IMR-90 (cell line): ENCODE measurements at regions of chr22 and their contacts with region 1.

Region 1: DNA sequence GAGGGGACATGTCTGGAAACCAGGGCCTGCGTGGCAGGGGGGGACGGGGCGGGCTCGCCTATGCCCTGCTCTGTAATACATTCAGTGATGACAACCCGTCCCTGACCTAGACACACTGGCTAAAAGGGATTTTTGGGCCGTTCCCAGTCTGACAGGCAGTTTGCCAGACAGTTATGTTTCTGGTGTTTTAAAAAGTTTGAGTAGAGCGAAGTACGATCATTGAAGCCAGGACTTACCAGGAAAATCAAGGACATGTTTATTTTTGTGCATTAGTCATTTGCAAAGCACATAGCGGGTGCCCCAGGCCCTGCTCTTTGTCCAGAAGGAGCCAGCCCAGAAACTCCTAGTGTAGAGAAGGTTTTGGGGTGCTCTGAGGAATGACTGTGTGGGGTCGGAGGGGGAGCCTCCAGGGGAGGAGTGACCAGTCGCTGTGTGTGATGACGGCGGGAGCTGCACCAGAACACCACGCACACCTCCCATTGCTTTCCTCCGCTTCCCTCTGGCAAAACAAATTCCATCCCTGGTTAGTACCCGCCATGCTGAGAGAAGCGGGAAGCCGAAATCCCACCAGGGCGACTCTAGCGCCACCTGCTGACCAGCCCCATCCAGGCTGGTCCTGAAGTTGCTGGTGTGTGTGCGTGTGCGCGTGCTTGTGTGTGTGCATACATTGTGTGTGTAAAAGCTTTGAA is 50.8 kb downstream of the FBLN1 start:
- DNase-seq: peak; percentile 93
- ATAC-seq: peak; percentile 46
- H3K4me3 ChIP-seq: no peak overlapping the region
- H3K27ac ChIP-seq: peak overlapping the region; percentile 89
- H3K4me1 ChIP-seq: peaks cover 41% of the 10 kb centered on the region
- H3K27me3 ChIP-seq: no peaks in the 10 kb centered on the region
- CTCF ChIP-seq: peak; percentile 98
- POLR2A ChIP-seq: no peak; the same call in 1 of the 2 replicates
- RAD21 ChIP-seq: peak; percentile 97

Region 2: GRCh38 chr22:44975427-44976262 is 577.9 kb before region 1 on chr22:
- CTCF ChIA-PET with region 1: no interaction called
- POLR2A ChIA-PET with region 1: no interaction called
- dilution Hi-C with region 1: no loop called
- in situ Hi-C with region 1: loop called (anchors 25 kb)
- intact Hi-C with region 1: no loop called
- DNase-seq: peak; percentile 76
- ATAC-seq: peak; percentile 99
- H3K4me3 ChIP-seq: no peak overlapping the region
- H3K27ac ChIP-seq: no peak overlapping the region
- H3K4me1 ChIP-seq: no peaks in the 10 kb centered on the region
- H3K27me3 ChIP-seq: peaks cover 30% of the 10 kb centered on the region
- CTCF ChIP-seq: peak; percentile 92
- POLR2A ChIP-seq: no peak
- RAD21 ChIP-seq: peak; percentile 78

Region 3: GRCh38 chr22:45192701-45193187 is 360.8 kb before region 1 on chr22:
- CTCF ChIA-PET with region 1: no interaction called
- POLR2A ChIA-PET with region 1: no interaction called
- dilution Hi-C with region 1: no loop called
- in situ Hi-C with region 1: no loop called
- intact Hi-C with region 1: no loop called
- DNase-seq: no peak
- ATAC-seq: no peak
- H3K4me3 ChIP-seq: no peak overlapping the region
- H3K27ac ChIP-seq: no peak overlapping the region
- H3K4me1 ChIP-seq: peaks cover 3% of the 10 kb centered on the region; the same call in 1 of the 2 replicates
- H3K27me3 ChIP-seq: no peaks in the 10 kb centered on the region
- CTCF ChIP-seq: 0 out of 2 replicates have a peak, but pooled peaks have one; percentile 14
- POLR2A ChIP-seq: no peak
- RAD21 ChIP-seq: no peak

Region 4: DNA sequence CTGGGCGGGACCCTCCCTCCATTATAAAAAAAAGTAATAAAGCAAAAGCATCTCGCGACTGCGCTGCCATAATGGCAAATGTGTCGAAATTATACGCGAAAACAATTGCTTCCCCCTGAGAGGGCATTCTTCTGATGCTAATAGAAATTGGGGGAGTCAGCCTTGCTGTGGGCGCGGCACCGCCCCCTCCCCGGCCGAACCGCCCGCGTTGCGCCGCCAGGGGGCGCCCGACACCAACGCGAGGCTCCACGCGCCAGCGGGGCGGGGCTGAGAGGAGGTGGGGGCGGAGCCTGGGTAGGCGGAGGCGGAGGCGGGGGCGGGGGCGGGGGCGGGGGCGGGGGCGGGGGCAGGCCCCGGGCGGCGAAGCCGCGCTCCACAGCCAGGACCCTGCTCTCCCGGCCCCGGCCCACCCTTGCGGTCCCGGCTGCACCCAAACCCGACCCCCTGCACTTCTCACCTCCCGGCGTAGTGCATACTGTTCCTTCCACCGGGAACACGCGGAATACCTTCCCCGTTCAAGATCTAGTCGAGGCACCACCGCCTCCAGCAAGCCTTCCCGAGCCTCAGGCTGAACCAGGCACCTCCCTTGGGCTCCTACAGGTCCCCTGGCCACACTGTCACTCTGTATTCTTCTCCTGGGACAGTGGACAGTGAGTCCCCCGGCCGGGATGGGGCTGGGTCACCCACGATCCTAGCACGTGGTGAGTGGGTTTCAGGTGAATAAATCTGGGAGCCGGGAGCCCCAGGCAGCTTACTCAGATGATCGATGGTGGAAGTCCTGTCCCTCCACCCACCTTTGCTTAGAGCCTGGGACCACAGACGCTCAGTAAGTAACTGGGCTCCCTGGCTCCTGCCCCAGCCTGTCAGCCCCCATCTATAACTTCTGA is 284.3 kb before region 1 on chr22:
- CTCF ChIA-PET with region 1: interaction called, 10 read pairs
- POLR2A ChIA-PET with region 1: no interaction called
- dilution Hi-C with region 1: no loop called
- in situ Hi-C with region 1: loop called (anchors 5 kb)
- intact Hi-C with region 1: loop called (anchors 1 kb)
- DNase-seq: peak; percentile 53
- ATAC-seq: peak; percentile 96
- H3K4me3 ChIP-seq: peak overlapping the region; percentile 86
- H3K27ac ChIP-seq: peak overlapping the region; percentile 54
- H3K4me1 ChIP-seq: peaks cover 9% of the 10 kb centered on the region
- H3K27me3 ChIP-seq: peaks cover 8% of the 10 kb centered on the region
- CTCF ChIP-seq: peak; percentile 90
- POLR2A ChIP-seq: no peak
- RAD21 ChIP-seq: peak; percentile 93

Region 5: DNA sequence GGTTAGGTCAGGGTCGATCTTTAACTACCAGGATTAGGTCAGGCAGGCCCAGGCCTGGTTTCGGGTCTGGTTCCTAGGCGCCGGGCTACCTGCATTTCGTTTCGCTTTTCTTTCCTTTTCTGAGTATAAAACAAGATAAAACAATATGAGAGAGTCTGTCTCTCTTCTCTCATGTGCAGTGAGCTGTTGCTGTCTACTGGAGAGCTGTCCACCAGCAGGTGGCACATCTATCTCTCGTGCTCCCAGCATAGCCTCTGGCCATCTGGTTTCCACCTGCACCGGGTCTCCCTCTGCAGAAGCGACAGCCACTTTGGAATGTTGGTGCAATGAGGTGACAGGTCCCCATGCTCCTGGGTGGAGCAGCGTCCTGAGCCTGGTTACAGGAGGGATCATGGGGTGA is 112.4 kb before region 1 on chr22:
- CTCF ChIA-PET with region 1: interaction called, 8 read pairs
- POLR2A ChIA-PET with region 1: no interaction called
- dilution Hi-C with region 1: no loop called
- in situ Hi-C with region 1: no loop called
- intact Hi-C with region 1: loop called (anchors 1 kb)
- DNase-seq: peak; percentile 68
- ATAC-seq: peak; percentile 75
- H3K4me3 ChIP-seq: no peak overlapping the region
- H3K27ac ChIP-seq: no peak overlapping the region
- H3K4me1 ChIP-seq: peaks cover 20% of the 10 kb centered on the region
- H3K27me3 ChIP-seq: no peaks in the 10 kb centered on the region
- CTCF ChIP-seq: peak; percentile 73
- POLR2A ChIP-seq: no peak
- RAD21 ChIP-seq: peak; percentile 84

Region 6: DNA sequence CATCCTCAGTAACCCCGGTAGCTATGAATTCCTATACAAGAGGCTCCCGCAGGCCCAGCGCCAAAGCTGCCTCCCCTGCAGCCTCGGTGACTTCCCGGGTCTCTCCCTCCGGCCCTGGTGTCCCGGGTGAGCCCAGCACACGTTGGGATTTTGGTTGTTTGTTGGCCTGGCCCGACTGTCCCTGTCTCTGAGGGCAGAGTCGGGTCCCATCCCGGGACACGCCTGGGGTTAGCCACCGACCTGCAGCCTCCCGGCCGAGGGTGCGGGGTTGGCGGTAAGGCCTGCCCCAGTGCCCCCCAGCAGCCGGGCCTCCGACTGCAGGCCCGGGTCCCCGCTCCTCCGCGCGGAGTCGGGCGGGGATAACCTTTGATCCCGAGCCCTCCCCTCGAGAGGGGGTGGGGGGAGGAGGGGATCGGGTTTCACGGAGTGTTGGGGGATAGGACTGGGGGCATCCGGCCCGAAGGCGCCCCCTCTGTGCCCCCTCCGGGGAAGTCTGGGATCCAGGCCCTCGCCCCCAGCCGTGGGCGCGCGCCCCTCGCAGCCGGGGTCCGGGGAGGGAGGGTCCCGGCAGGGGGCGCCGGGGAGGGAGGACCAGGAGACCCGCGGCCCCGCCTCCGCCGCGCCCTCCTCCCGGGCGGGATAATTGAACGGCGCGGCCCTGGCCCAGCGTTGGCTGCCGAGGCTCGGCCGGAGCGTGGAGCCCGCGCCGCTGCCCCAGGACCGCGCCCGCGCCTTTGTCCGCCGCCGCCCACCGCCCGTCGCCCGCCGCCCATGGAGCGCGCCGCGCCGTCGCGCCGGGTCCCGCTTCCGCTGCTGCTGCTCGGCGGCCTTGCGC is 51.1 kb before region 1 on chr22 and contains the start of gene FBLN1:
- CTCF ChIA-PET with region 1: interaction called, 8 read pairs
- POLR2A ChIA-PET with region 1: no interaction called
- dilution Hi-C with region 1: no loop called
- in situ Hi-C with region 1: no loop called
- intact Hi-C with region 1: loop called (anchors 2 kb)
- DNase-seq: no peak
- ATAC-seq: peak; percentile 74
- H3K4me3 ChIP-seq: peak within 1 kb of the TSS; percentile 80
- H3K27ac ChIP-seq: peak within 1 kb of the TSS; percentile 90
- H3K4me1 ChIP-seq: peaks cover 28% of the 10 kb centered on the region
- H3K27me3 ChIP-seq: no peaks in the 10 kb centered on the region
- CTCF ChIP-seq: peak; percentile 21; the same call in 1 of the 2 replicates
- POLR2A ChIP-seq: no peak
- RAD21 ChIP-seq: no peak
- total RNA-seq, gene FBLN1: 11.3 and 11.4 TPM in 2 replicates

Region 7: DNA sequence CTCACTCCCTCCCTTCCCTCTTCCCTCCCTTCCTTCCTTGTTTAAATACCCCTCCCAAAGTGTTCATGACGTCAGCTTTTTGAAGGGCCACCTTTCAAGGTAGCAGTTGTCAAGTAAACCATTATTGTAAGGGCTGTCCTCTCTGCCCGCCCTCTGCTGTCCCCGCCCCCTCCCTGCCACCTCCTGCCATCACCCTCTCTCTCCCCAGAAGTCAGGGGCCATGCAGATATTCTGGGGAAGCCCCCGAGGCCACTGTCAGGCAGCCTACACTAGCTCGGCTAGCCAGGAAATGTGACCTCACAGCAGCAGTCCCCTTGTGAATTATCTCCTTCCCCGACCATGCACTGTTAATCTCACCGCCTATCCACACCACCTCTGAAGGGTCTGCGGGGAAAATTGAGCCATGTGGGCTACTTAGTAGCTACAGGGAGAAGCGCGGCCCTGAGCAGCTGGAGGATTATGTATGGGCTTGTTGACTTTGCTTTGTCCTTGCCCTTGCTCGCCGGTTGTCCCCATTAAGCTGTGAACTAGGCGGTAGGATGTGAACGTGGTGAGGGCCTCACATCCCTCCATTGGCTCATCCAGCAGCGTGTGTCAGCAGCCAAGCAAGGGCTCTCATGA is 76.1 kb after region 1 on chr22:
- CTCF ChIA-PET with region 1: no interaction called
- POLR2A ChIA-PET with region 1: no interaction called
- dilution Hi-C with region 1: no loop called
- in situ Hi-C with region 1: no loop called
- intact Hi-C with region 1: no loop called
- DNase-seq: no peak
- ATAC-seq: no peak
- H3K4me3 ChIP-seq: no peak overlapping the region
- H3K27ac ChIP-seq: no peak overlapping the region
- H3K4me1 ChIP-seq: no peaks in the 10 kb centered on the region; the same call in 1 of the 2 replicates
- H3K27me3 ChIP-seq: peaks cover 27% of the 10 kb centered on the region
- CTCF ChIP-seq: no peak
- POLR2A ChIP-seq: no peak
- RAD21 ChIP-seq: no peak

Region 8: GRCh38 chr22:45842291-45842991 is 288.9 kb after region 1 on chr22:
- CTCF ChIA-PET with region 1: no interaction called
- POLR2A ChIA-PET with region 1: no interaction called
- dilution Hi-C with region 1: no loop called
- in situ Hi-C with region 1: no loop called
- intact Hi-C with region 1: no loop called
- DNase-seq: peak; percentile 77
- ATAC-seq: no peak
- H3K4me3 ChIP-seq: no peak overlapping the region
- H3K27ac ChIP-seq: no peak overlapping the region
- H3K4me1 ChIP-seq: peaks cover 7% of the 10 kb centered on the region
- H3K27me3 ChIP-seq: no peaks in the 10 kb centered on the region
- CTCF ChIP-seq: no peak
- POLR2A ChIP-seq: no peak
- RAD21 ChIP-seq: no peak